Right cardiac atrium (tissue), 5 donors: ENCODE measurements at regions of chr17 and their contacts with region 1.

Region 1: GRCh38 chr17:13393841-13394710 is 207.7 kb downstream of the HS3ST3A1 start:
- DNase-seq: no peak
- ATAC-seq: peak; percentile 56 to 72
- H3K4me3 ChIP-seq: no peak overlapping the region
- H3K27ac ChIP-seq: no peak overlapping the region
- H3K4me1 ChIP-seq: no peaks in the 10 kb centered on the region
- H3K27me3 ChIP-seq: no peaks in the 10 kb centered on the region

Region 2: GRCh38 chr17:13457783-13458182 is 63.7 kb after region 1 on chr17:
- intact Hi-C with region 1: loop called in 1 of 4 experiments (anchors 10 kb)
- DNase-seq: no peak
- ATAC-seq: no peak
- H3K4me3 ChIP-seq: no peak overlapping the region
- H3K27ac ChIP-seq: no peak overlapping the region
- H3K4me1 ChIP-seq: no peaks in the 10 kb centered on the region
- H3K27me3 ChIP-seq: peaks cover 2% of the 10 kb centered on the region